H1 (cell line): ENCODE measurements at regions of chr7 and their contacts with region 1.

Region 1: DNA sequence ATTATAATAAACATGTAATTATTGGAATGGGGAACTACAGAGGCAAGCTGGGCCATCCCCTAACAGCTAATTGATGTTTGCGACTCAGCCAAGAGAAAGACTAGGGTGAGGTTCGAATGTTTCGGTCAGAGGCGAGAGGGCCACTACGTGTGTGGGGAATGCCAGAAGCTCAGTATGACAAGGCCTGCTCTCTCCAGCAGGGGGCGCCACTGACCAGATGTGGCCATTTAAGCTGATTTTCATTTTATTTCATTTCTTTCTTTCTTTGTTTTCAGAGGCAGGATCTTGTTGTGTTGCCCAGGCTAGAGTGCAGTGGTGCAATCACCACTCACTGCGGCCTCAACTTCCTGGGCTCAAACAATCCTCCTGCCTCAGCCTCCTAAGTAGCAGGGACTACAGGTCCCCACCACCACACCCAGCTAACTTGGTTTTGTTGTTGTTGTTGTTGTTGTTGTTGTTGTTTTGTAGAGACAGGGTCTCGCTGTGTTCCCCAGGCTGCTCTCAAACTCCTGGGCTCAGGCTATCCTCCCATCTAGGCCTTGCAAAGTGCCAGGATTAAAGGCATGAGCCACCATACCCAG is 38.1 kb downstream of the TMEM130 start:
- DNase-seq: peak in 1 of 2 experiments; percentile 87
- H3K4me3 ChIP-seq: no peak overlapping the region
- H3K27ac ChIP-seq: no peak overlapping the region
- H3K4me1 ChIP-seq: peaks cover 0 to 9% (median 1%) of the 10 kb centered on the region in 4 experiments; a peak in 6 of 7 replicates
- H3K27me3 ChIP-seq: no peaks in the 10 kb centered on the region
- CTCF ChIP-seq: peak; percentile 61 to 85 (median 82)
- EP300 ChIP-seq: no peak
- POLR2A ChIP-seq: no peak
- RAD21 ChIP-seq: peak; percentile 42 to 59; a peak in 3 of 4 replicates

Region 2: GRCh38 chr7:98733036-98733435 is 98.7 kb before region 1 on chr7:
- CTCF ChIA-PET with region 1: interaction called, 18 read pairs
- POLR2A ChIA-PET with region 1: no interaction called
- DNase-seq: peak in 1 of 2 experiments; percentile 96
- H3K4me3 ChIP-seq: no peak overlapping the region
- H3K27ac ChIP-seq: no peak overlapping the region
- H3K4me1 ChIP-seq: peaks cover 0 to 12% (median 2%) of the 10 kb centered on the region in 4 experiments; a peak in 4 of 7 replicates
- H3K27me3 ChIP-seq: no peaks in the 10 kb centered on the region
- CTCF ChIP-seq: peak; percentile 70 to 97 (median 92)
- EP300 ChIP-seq: no peak
- POLR2A ChIP-seq: no peak
- RAD21 ChIP-seq: peak; percentile 58 to 74

Region 3: DNA sequence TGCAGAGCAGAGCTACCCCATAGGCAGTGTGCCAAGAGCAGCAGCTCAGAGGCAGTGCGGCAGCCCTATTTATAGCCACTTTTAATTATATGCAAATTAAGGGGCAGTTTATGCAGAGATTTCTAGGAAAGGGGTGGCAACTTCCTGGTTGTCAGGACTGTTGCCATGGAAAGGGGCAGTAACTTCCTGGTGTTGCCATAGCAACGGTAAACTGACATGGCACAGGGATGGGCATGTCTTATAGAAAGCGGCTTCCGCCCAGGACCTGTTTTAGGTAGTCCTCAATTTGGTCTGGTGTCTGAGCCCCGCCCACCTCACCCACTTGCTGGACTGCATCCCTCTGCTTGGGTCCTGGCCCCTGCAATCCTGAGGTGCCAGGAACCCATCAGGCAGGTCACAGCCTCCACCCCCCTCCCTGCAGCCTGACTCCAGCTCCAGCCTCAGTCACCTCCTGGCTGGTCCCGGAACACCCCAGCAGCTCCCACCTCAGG is 77.7 kb before region 1 on chr7:
- CTCF ChIA-PET with region 1: interaction called, 21 read pairs
- POLR2A ChIA-PET with region 1: interaction called, 3 read pairs
- DNase-seq: peak in 1 of 2 experiments; percentile 54
- H3K4me3 ChIP-seq: no peak overlapping the region
- H3K27ac ChIP-seq: peak overlapping the region; percentile 7; the same call in 1 of the 2 replicates
- H3K4me1 ChIP-seq: no peaks in the 10 kb centered on the region; a peak in 1 of 7 replicates
- H3K27me3 ChIP-seq: no peaks in the 10 kb centered on the region
- CTCF ChIP-seq: no peak
- EP300 ChIP-seq: no peak
- POLR2A ChIP-seq: no peak
- RAD21 ChIP-seq: no peak

Region 4: DNA sequence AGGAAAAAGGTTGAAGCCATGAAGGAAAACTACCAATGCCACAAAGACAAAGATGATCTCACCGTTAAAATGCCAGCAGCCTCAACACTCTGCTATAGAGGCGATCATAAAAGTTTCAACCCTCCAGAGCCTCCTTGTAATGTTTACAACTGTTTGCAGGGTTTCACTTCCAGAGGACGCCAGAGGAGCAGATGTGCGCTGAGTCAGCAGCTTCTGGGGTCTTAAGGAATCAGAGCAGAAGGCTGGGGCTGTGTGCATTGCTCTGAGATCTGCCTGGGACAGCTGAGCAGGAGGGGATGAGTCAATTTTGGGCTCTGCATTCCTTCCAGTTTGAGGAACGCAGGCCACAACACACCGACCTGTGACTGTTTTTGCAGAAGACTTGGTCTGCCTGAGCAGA is 60.2 kb before region 1 on chr7:
- CTCF ChIA-PET with region 1: interaction called, 37 read pairs
- POLR2A ChIA-PET with region 1: interaction called, 4 read pairs
- DNase-seq: no peak
- H3K4me3 ChIP-seq: peak overlapping the region in 3 of 4 experiments; percentile 26 to 45 (median 40); a peak in 6 of 8 replicates
- H3K27ac ChIP-seq: no peak overlapping the region
- H3K4me1 ChIP-seq: peaks cover 4 to 16% (median 8%) of the 10 kb centered on the region in 4 experiments
- H3K27me3 ChIP-seq: peaks cover 0 to 7% (median under 1%) of the 10 kb centered on the region in 4 experiments; a peak in 3 of 7 replicates
- CTCF ChIP-seq: no peak
- EP300 ChIP-seq: no peak
- POLR2A ChIP-seq: no peak
- RAD21 ChIP-seq: no peak

Region 5: DNA sequence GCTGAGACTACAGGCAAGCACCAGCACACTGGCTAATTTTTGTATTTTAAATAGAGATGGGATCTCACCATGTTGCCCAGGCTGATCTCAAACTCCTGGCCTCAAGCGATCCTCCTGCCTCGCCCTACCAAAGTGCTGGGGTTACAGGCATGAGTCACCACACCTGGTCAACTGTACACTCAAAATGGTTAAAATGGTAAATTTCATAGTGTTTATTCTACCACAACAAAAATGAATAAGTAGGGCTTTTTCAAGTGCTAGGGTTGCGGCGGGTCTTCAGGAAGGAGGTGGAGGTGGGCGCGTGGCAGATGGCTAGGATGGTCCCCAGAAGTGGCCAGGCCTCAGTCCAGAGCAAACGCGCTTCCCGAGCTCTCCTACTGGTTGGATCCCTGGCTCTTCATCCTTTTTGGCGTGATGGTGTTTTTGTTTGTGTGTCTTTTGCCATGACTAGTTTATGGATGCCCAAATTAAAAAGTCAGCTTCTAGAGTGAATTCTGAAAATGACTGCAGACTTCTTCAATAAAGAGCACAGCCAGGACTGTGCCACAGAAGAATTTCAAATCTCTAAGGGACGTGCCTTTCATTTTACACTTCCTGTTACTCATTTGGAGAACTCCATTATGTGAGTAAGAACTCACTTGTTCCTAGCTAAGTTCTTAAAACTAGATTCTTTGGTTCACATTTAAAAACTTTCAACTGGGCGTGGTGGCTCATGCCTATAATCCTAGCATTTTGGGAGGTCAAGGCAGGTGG is 35.8 kb before region 1 on chr7:
- CTCF ChIA-PET with region 1: interaction called, 28 read pairs
- POLR2A ChIA-PET with region 1: no interaction called
- DNase-seq: no peak
- H3K4me3 ChIP-seq: no peak overlapping the region
- H3K27ac ChIP-seq: no peak overlapping the region
- H3K4me1 ChIP-seq: no peaks in the 10 kb centered on the region
- H3K27me3 ChIP-seq: no peaks in the 10 kb centered on the region
- CTCF ChIP-seq: no peak
- EP300 ChIP-seq: no peak
- POLR2A ChIP-seq: no peak
- RAD21 ChIP-seq: no peak

Region 6: GRCh38 chr7:98810153-98810802 is 21.5 kb before region 1 on chr7:
- CTCF ChIA-PET with region 1: interaction called, 14 read pairs
- POLR2A ChIA-PET with region 1: interaction called, 3 read pairs
- DNase-seq: no peak
- H3K4me3 ChIP-seq: no peak overlapping the region
- H3K27ac ChIP-seq: no peak overlapping the region
- H3K4me1 ChIP-seq: peaks cover 0 to 2% (median 0%) of the 10 kb centered on the region in 4 experiments; a peak in 1 of 7 replicates
- H3K27me3 ChIP-seq: no peaks in the 10 kb centered on the region; a peak in 1 of 7 replicates
- CTCF ChIP-seq: no peak
- EP300 ChIP-seq: no peak
- POLR2A ChIP-seq: no peak
- RAD21 ChIP-seq: no peak

Region 7: GRCh38 chr7:98949336-98950044 is 117.8 kb after region 1 on chr7:
- CTCF ChIA-PET with region 1: no interaction called
- POLR2A ChIA-PET with region 1: no interaction called
- DNase-seq: no peak
- H3K4me3 ChIP-seq: no peak overlapping the region
- H3K27ac ChIP-seq: no peak overlapping the region
- H3K4me1 ChIP-seq: no peaks in the 10 kb centered on the region
- H3K27me3 ChIP-seq: no peaks in the 10 kb centered on the region
- CTCF ChIP-seq: no peak
- EP300 ChIP-seq: no peak
- POLR2A ChIP-seq: no peak
- RAD21 ChIP-seq: no peak